ENCODE measurements at regions of chr21 and their contacts with region 1.

Region 1: DNA sequence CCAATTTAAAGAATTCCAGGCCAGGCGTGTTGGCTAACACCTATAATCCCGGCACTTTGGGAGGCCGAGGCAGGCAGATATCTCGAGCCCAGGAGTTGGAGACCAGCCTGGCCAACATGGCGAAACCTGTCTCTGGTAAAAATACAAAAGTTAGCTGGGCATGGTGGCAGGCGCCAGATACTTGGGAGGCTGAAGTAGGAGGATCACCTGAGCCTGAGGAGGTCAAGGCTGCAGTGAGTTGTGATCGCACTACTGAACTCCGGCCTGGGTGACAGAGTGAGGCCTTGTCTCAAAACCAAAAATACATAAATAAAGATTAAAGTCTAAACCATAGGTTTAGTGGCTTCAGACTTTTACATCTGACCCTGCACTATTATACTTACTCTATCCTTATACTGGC is 32.4 kb downstream of the BTG3 start:
- DNase-seq: no peak
- ATAC-seq: no peak

Region 2: DNA sequence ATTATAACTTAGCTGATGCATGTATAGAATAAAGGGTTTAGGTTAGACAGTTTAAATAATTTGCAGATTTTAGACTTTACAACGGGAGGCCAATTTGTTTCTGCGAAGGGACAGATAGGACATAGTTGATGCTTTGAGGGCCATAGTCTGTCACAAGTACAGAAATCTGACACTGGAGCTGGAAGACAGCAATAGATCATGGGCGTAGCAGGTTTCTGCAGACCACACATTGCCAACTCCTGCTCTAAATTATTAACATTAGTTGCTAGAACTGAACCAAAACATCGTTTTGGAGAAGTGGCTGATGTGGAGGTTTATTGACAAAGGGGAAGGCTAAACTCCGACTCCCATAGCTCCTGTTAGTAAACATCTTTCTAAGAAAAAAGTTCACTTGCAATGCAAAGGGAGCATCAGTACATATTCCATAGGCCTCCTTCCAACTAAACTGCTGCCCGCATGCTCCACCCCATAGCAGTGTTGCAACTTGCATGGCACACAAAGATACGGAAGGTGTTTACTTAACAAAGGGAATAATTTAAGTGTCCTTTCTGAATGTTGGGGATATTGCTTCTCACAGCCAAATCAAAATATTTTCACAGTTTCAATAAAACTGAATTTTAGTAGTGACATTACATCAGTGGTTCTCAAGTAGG is 929.5 kb before region 1 on chr21:
- intact Hi-C with region 1: no loop called
- DNase-seq: no peak
- ATAC-seq: no peak

Region 3: DNA sequence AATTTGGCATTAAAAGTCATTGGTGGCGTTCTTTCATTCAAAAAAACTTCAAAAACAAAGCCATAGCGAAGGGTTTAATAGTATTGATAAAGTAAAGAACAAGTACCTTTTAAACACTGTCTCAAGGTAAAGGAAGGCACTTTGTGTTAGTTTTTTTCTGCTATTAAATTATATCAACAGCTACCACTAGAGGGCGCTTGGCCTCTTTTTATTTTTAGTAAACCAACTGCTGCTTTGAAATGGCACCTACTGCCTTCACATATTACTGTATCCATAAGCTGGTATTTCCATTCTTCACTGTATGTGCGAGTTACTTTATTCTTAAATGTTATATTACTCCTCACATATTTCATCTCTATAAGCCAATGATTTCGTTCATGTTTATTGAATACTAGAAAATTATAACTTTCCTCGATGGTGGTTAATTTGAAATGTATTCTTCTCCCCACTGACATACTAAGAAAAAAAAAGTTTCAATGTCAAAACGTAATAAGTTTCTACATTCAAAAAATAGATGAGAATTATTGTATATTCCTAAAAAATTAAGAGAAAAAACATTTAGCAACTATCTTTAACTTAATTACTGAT is 193.2 kb before region 1 on chr21:
- intact Hi-C with region 1: loop called in 1 of 2 experiments (anchors 5 kb)
- DNase-seq: peak; percentile 26 to 60
- ATAC-seq: peak; percentile 77

Measured in left colon (tissue), 2 donors.